Natural killer cell (primary cell): ENCODE measurements at regions of chr13 and their contacts with region 1.

Region 1: GRCh38 chr13:31431722-31432137 is 232.0 kb downstream of the B3GLCT start:
- DNase-seq: peak; percentile 47 to 64
- ATAC-seq: peak; percentile 87 to 99 (median 93)
- H3K4me3 ChIP-seq: no peak overlapping the region
- H3K4me3 Mint-ChIP-seq: no peak overlapping the region
- H3K27ac ChIP-seq: no peak overlapping the region
- H3K27ac Mint-ChIP-seq: no peak overlapping the region
- H3K4me1 ChIP-seq: no peaks in the 10 kb centered on the region
- H3K4me1 Mint-ChIP-seq: peaks cover 0 to 7% of the 10 kb centered on the region in 2 donors
- H3K27me3 ChIP-seq: no peaks in the 10 kb centered on the region
- H3K27me3 Mint-ChIP-seq: peaks cover 4 to 7% of the 10 kb centered on the region in 2 donors
- CTCF ChIP-seq: peak; percentile 90

Region 2: GRCh38 chr13:31605076-31605858 is 173.5 kb after region 1 on chr13:
- intact Hi-C with region 1: no loop called
- DNase-seq: no peak
- ATAC-seq: no peak
- H3K4me3 ChIP-seq: no peak overlapping the region
- H3K4me3 Mint-ChIP-seq: no peak overlapping the region
- H3K27ac ChIP-seq: no peak overlapping the region
- H3K27ac Mint-ChIP-seq: no peak overlapping the region
- H3K4me1 ChIP-seq: no peaks in the 10 kb centered on the region
- H3K4me1 Mint-ChIP-seq: peaks cover 0 to 4% of the 10 kb centered on the region in 2 donors
- H3K27me3 ChIP-seq: no peaks in the 10 kb centered on the region
- H3K27me3 Mint-ChIP-seq: peaks cover 0 to 11% of the 10 kb centered on the region in 2 donors
- CTCF ChIP-seq: no peak

Region 3: GRCh38 chr13:31742097-31742734 is 310.5 kb after region 1 on chr13:
- intact Hi-C with region 1: loop called (anchors 1 kb)
- DNase-seq: peak; percentile 51 to 78
- ATAC-seq: peak; percentile 95 to 98 (median 95)
- H3K4me3 ChIP-seq: no peak overlapping the region
- H3K4me3 Mint-ChIP-seq: no peak overlapping the region
- H3K27ac ChIP-seq: no peak overlapping the region
- H3K27ac Mint-ChIP-seq: no peak overlapping the region
- H3K4me1 ChIP-seq: no peaks in the 10 kb centered on the region
- H3K4me1 Mint-ChIP-seq: peaks cover 4 to 5% of the 10 kb centered on the region in 2 donors
- H3K27me3 ChIP-seq: peaks cover 2% of the 10 kb centered on the region
- H3K27me3 Mint-ChIP-seq: peaks cover 14 to 18% of the 10 kb centered on the region in 2 donors
- CTCF ChIP-seq: peak; percentile 99